CD8-positive, alpha-beta T cell (primary cell): ENCODE measurements at regions of chr6 and their contacts with region 1.

Region 1: GRCh38 chr6:42978839-42979522 is at the start of gene PEX6:
- DNase-seq: peak; percentile 77 to 98 (median 94)
- ATAC-seq: peak; percentile 89
- H3K4me3 ChIP-seq: peak within 1 kb of the TSS; percentile 49 to 71
- H3K4me3 Mint-ChIP-seq: peak within 1 kb of the TSS; percentile 90
- H3K27ac ChIP-seq: peak within 1 kb of the TSS; percentile 64 to 89
- H3K27ac Mint-ChIP-seq: peak within 1 kb of the TSS; percentile 95
- H3K4me1 ChIP-seq: peaks cover 45% of the 10 kb centered on the region
- H3K4me1 Mint-ChIP-seq: peaks cover 55% of the 10 kb centered on the region
- H3K27me3 ChIP-seq: no peaks in the 10 kb centered on the region
- H3K27me3 Mint-ChIP-seq: no peaks in the 10 kb centered on the region
- CTCF ChIP-seq: no peak
- total RNA-seq, gene PEX6: 6.7 to 6.8 TPM

Region 2: DNA sequence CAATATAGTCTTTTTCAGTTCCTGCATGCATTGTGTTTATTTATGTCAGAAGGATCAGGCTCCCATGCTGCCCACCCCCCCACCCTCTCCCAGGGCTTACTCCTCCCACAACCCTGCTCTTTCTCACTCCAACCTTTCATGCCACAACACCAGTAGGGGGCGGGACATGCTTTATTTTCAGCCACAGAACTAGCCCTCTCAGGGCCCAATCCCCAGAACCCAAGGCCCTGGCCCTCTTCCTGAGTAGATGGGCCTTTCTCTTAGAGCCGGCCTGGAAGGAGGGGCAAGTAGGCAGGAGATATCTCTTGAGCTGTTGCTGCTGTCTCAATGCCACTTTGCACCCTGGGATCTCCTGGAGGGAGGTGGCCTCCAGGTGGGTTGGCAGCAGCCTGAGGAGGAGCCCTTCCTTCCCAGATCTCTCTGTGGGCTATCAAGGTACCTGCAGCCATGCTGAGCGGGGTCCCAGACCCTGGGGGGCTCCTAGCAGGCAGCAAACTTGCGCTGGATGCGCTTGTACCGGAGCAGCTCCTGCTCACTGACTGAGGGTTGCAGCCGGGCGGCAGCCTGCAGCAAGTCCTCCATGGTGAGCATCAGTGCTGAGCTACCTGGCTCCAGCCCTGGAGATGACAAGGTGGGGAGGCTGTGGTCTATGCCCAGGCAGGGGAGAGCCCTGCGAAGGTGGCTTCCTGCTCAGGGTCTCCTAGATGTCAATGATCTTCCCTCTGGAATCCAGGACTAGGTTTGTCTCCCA is 15.0 kb before region 1 on chr6:
- CTCF ChIA-PET with region 1: interaction called, 7 read pairs
- POLR2A ChIA-PET with region 1: interaction called, 6 read pairs
- intact Hi-C with region 1: loop called in 1 of 2 experiments (anchors 1 kb)
- DNase-seq: peak in 4 of 9 experiments; percentile 28 to 56 (median 45)
- ATAC-seq: peak; percentile 43
- H3K4me3 ChIP-seq: no peak overlapping the region
- H3K4me3 Mint-ChIP-seq: no peak overlapping the region
- H3K27ac ChIP-seq: no peak overlapping the region
- H3K27ac Mint-ChIP-seq: no peak overlapping the region
- H3K4me1 ChIP-seq: peaks cover 10% of the 10 kb centered on the region
- H3K4me1 Mint-ChIP-seq: peaks cover 15% of the 10 kb centered on the region
- H3K27me3 ChIP-seq: no peaks in the 10 kb centered on the region
- H3K27me3 Mint-ChIP-seq: no peaks in the 10 kb centered on the region
- CTCF ChIP-seq: no peak

Region 3: DNA sequence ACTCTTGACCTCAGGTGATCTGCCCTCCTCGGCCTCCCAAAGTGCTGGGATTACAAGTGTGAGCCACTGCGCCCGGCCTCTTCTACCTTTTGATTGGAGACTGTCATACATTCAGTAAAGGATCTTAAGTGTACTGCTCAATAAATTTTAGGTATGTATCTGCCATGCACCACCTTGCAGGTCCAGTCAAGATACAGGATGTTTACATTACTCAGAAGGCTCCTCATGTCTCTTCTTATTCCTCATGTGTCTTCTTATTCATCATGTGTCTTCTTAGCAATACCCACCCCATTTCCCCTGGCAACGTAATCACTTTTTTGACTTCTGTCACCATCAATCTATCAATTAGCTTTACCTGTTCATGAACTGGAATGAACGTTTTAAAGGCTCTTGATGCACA is 26.9 kb after region 1 on chr6:
- CTCF ChIA-PET with region 1: interaction called, 3 read pairs
- POLR2A ChIA-PET with region 1: interaction called, 17 read pairs
- intact Hi-C with region 1: no loop called
- DNase-seq: no peak
- ATAC-seq: no peak
- H3K4me3 ChIP-seq: no peak overlapping the region
- H3K4me3 Mint-ChIP-seq: no peak overlapping the region
- H3K27ac ChIP-seq: no peak overlapping the region
- H3K27ac Mint-ChIP-seq: no peak overlapping the region
- H3K4me1 ChIP-seq: no peaks in the 10 kb centered on the region
- H3K4me1 Mint-ChIP-seq: peaks cover 3% of the 10 kb centered on the region
- H3K27me3 ChIP-seq: no peaks in the 10 kb centered on the region
- H3K27me3 Mint-ChIP-seq: no peaks in the 10 kb centered on the region
- CTCF ChIP-seq: no peak

Region 4: GRCh38 chr6:43021270-43022047 is 42.5 kb after region 1 on chr6 and contains the start of gene RRP36:
- CTCF ChIA-PET with region 1: no interaction called
- POLR2A ChIA-PET with region 1: interaction called, 15 read pairs
- intact Hi-C with region 1: no loop called
- DNase-seq: peak in 8 of 9 experiments; percentile 54 to 81 (median 72)
- ATAC-seq: peak; percentile 78
- H3K4me3 ChIP-seq: peak within 1 kb of the TSS; percentile 93 to 94
- H3K4me3 Mint-ChIP-seq: peak within 1 kb of the TSS; percentile 99
- H3K27ac ChIP-seq: peak within 1 kb of the TSS; percentile 78 to 83
- H3K27ac Mint-ChIP-seq: peak within 1 kb of the TSS; percentile 96
- H3K4me1 ChIP-seq: peaks cover 21% of the 10 kb centered on the region
- H3K4me1 Mint-ChIP-seq: peaks cover 44% of the 10 kb centered on the region
- H3K27me3 ChIP-seq: no peaks in the 10 kb centered on the region
- H3K27me3 Mint-ChIP-seq: no peaks in the 10 kb centered on the region
- CTCF ChIP-seq: no peak
- total RNA-seq, gene RRP36: 20.1 to 20.2 TPM

Region 5: GRCh38 chr6:43053545-43054205 is 74.7 kb after region 1 on chr6 and contains the start of gene CUL7:
- CTCF ChIA-PET with region 1: no interaction called
- POLR2A ChIA-PET with region 1: interaction called, 17 read pairs
- intact Hi-C with region 1: loop called in 1 of 2 experiments (anchors 1 kb)
- DNase-seq: peak; percentile 71 to 94 (median 91)
- ATAC-seq: peak; percentile 99
- H3K4me3 ChIP-seq: peak within 1 kb of the TSS; percentile 81 to 83
- H3K4me3 Mint-ChIP-seq: peak within 1 kb of the TSS; percentile 92
- H3K27ac ChIP-seq: peak within 1 kb of the TSS; percentile 79 to 89
- H3K27ac Mint-ChIP-seq: peak within 1 kb of the TSS; percentile 97
- H3K4me1 ChIP-seq: peaks cover 25% of the 10 kb centered on the region
- H3K4me1 Mint-ChIP-seq: peaks cover 48% of the 10 kb centered on the region
- H3K27me3 ChIP-seq: no peaks in the 10 kb centered on the region
- H3K27me3 Mint-ChIP-seq: no peaks in the 10 kb centered on the region
- CTCF ChIP-seq: no peak
- total RNA-seq, gene CUL7: 5.2 to 5.4 TPM